Activated CD8-positive, alpha-beta T cell treated with anti-CD3 and anti-CD28 coated beads, Interleukin-2, amount 10 ng/mL, durations not matched to agents 7 days and 5 days (primary cell): ENCODE measurements at regions of chr12 and their contacts with region 1.

Region 1: GRCh38 chr12:6867413-6868210 is at the start of gene TPI1:
- DNase-seq: peak; percentile 85
- ATAC-seq: peak; percentile 70
- H3K4me3 Mint-ChIP-seq: peak within 1 kb of the TSS; percentile 98
- H3K27ac Mint-ChIP-seq: peak within 1 kb of the TSS; percentile 96
- H3K4me1 Mint-ChIP-seq: peaks cover 58% of the 10 kb centered on the region
- H3K27me3 Mint-ChIP-seq: no peaks in the 10 kb centered on the region
- total RNA-seq, gene TPI1: 1,505 to 1,545 TPM

Region 2: GRCh38 chr12:6489449-6489848 is 378.2 kb before region 1 on chr12:
- CTCF ChIA-PET with region 1: no interaction called
- POLR2A ChIA-PET with region 1: no interaction called
- DNase-seq: no peak
- ATAC-seq: no peak
- H3K4me3 Mint-ChIP-seq: no peak overlapping the region
- H3K27ac Mint-ChIP-seq: no peak overlapping the region
- H3K4me1 Mint-ChIP-seq: peaks cover 11% of the 10 kb centered on the region
- H3K27me3 Mint-ChIP-seq: no peaks in the 10 kb centered on the region

Region 3: DNA sequence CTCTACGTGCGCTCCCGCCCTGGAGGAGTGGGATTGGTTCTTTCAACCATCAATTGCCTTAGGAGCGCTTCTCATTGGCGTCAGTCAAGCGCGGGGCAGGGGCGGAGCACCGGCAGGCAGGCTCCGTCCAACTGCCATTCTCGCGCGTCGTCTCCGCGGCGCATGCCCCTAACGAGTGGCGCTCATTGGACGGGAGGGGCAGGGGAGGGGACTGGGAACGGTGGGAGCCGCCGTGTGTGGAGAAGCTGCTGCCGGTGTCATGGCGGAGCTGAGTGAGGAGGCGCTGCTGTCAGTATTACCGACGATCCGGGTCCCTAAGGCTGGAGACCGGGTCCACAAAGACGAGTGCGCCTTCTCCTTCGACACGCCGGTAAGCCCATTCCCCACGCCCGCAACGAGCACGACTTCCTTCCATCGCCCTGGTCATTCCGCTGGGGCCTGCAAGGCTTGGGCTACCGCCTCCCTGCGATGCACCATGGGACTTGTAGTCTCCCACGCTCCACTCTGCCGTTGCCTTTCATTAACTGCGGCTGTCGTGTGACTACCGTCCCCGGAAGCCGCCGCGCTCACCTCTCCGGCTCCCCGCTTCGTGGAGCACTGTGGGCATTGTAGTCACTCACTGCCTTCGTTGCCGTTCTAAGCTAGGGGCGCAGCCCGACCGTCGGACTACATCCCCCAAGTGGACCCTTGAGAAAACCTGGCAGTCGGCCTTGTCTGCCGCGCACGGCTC is 15.5 kb before region 1 on chr12 and contains the start of gene USP5:
- CTCF ChIA-PET with region 1: interaction called, 121 read pairs
- POLR2A ChIA-PET with region 1: interaction called, 93 read pairs
- DNase-seq: peak; percentile 99
- ATAC-seq: peak; percentile 83
- H3K4me3 Mint-ChIP-seq: peak within 1 kb of the TSS; percentile 90
- H3K27ac Mint-ChIP-seq: peak within 1 kb of the TSS; percentile 98
- H3K4me1 Mint-ChIP-seq: peaks cover 44% of the 10 kb centered on the region
- H3K27me3 Mint-ChIP-seq: no peaks in the 10 kb centered on the region
- total RNA-seq, gene USP5: 105 to 108 TPM

Region 4: DNA sequence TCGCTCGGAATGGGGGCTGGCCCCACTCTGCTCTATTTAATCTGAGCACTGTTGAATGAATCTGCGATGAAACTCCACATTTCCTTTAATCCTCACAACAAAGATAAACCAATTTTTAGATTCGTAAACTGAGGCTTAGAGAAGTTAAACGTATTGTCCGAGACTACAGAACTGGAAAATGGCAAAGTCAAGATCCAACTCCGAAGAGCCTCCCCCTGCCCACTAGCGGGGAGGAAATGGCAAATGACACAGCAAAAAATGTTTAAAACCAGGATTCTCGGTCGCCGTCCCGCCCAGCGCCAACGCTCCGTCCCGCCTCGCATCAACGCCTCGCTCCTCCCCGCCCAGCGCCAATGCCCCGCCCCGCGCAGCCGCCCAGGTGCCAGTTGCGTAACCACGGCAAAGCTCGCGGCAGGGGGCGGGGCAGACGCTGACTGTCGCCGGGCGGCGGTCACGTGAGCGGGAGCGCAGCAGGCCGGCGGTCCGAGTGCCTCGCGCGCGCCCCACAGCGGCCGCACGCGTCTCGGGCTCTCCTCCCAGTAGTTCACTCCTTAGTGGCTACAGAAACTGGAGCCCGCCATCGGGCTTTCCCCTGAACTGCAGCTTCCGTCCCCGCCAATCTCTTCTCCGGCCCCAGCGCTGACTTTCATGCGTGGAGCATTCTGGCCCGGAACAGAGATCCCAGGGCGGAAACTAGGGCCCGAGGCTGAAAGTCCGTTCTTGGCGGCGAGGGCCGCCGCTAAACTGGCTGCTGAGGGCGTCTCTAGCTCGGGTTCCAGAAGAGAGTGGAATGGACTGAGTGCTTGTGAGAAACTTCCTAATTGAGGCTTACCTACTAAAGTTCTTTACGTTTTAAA is 23.4 kb after region 1 on chr12:
- CTCF ChIA-PET with region 1: interaction called, 94 read pairs
- POLR2A ChIA-PET with region 1: interaction called, 40 read pairs
- DNase-seq: peak; percentile 99
- ATAC-seq: peak; percentile 97
- H3K4me3 Mint-ChIP-seq: peak overlapping the region; percentile 82
- H3K27ac Mint-ChIP-seq: peak overlapping the region; percentile 95
- H3K4me1 Mint-ChIP-seq: peaks cover 29% of the 10 kb centered on the region
- H3K27me3 Mint-ChIP-seq: no peaks in the 10 kb centered on the region

Region 5: DNA sequence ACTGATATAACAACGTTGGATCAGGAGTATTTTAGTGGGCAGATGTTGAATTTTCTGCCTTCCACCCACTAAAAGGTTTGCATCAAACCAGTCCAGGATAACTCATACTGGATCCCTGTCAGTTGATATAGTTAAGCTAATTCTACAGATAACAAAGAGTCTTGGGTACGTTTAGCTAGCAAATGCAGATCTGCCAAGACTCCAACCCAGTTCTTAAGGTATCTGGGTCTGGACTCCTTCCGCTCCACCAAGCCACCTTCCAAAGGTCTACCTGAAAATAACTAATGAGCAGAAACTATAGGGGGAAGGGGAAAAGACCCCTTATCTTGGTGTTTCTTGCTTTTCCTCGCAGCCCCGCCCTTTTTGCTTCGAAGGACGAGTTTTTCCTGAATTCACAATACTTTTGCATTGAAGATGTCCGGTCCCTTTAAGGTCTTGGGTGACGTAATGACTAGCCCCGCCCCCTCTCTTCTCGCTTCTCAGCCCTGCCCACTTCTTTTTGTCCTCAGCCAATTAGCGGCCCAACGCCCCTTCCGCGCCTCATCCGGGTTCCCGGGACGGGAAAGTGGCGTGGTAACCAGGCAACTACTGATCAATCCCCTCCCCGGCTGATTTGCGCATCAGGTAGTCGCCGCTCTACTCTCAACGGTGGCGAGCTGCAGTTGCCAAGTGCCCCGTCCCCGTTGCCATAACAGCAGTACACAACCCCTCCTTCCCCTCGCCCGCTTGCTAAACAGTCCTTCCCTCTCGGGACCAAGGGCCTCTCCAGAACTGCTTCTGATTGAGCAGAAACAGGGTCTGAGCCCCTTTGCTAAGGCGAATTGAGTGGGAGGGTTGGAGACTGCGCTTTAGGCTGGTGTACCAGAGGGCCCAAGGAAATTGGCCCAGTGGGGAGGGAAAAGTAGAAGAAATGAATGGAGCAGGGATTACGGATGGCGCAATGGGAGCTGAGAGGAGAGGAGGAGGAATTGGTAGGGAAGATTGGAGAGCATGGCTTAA is 37.0 kb after region 1 on chr12 and contains the start of gene LRRC23:
- CTCF ChIA-PET with region 1: interaction called, 38 read pairs
- POLR2A ChIA-PET with region 1: interaction called, 12 read pairs
- DNase-seq: peak; percentile 99
- ATAC-seq: peak; percentile 95
- H3K4me3 Mint-ChIP-seq: no peak within 1 kb of the TSS
- H3K27ac Mint-ChIP-seq: no peak within 1 kb of the TSS
- H3K4me1 Mint-ChIP-seq: peaks cover 11% of the 10 kb centered on the region
- H3K27me3 Mint-ChIP-seq: no peaks in the 10 kb centered on the region
- total RNA-seq, gene LRRC23: 6.5 to 8.6 TPM

Region 6: GRCh38 chr12:6914246-6914946 is 46.8 kb after region 1 on chr12 and contains the start of gene ENO2:
- CTCF ChIA-PET with region 1: interaction called, 22 read pairs
- POLR2A ChIA-PET with region 1: interaction called, 6 read pairs
- DNase-seq: peak; percentile 87
- ATAC-seq: peak; percentile 92
- H3K4me3 Mint-ChIP-seq: peak within 1 kb of the TSS; percentile 92
- H3K27ac Mint-ChIP-seq: peak within 1 kb of the TSS; percentile 84
- H3K4me1 Mint-ChIP-seq: peaks cover 45% of the 10 kb centered on the region
- H3K27me3 Mint-ChIP-seq: peaks cover 5% of the 10 kb centered on the region
- total RNA-seq, gene ENO2: 133 to 141 TPM

Region 7: GRCh38 chr12:6927379-6928024 is 59.9 kb after region 1 on chr12 and contains the start of gene ATN1:
- CTCF ChIA-PET with region 1: interaction called, 25 read pairs
- POLR2A ChIA-PET with region 1: interaction called, 17 read pairs
- DNase-seq: peak; percentile 51
- ATAC-seq: peak; percentile 34
- H3K4me3 Mint-ChIP-seq: peak within 1 kb of the TSS; percentile 78
- H3K27ac Mint-ChIP-seq: peak within 1 kb of the TSS; percentile 53
- H3K4me1 Mint-ChIP-seq: peaks cover 68% of the 10 kb centered on the region
- H3K27me3 Mint-ChIP-seq: no peaks in the 10 kb centered on the region
- total RNA-seq, gene ATN1: 21.6 to 24.5 TPM

Region 8: GRCh38 chr12:6937481-6938297 is 70.1 kb after region 1 on chr12:
- CTCF ChIA-PET with region 1: interaction called, 37 read pairs
- POLR2A ChIA-PET with region 1: interaction called, 41 read pairs
- DNase-seq: peak; percentile 96
- ATAC-seq: peak; percentile 93
- H3K4me3 Mint-ChIP-seq: peak overlapping the region; percentile 82
- H3K27ac Mint-ChIP-seq: peak overlapping the region; percentile 97
- H3K4me1 Mint-ChIP-seq: peaks cover 62% of the 10 kb centered on the region
- H3K27me3 Mint-ChIP-seq: no peaks in the 10 kb centered on the region